ENCODE measurements at regions of chr2 and their contacts with region 1.

Region 1: DNA sequence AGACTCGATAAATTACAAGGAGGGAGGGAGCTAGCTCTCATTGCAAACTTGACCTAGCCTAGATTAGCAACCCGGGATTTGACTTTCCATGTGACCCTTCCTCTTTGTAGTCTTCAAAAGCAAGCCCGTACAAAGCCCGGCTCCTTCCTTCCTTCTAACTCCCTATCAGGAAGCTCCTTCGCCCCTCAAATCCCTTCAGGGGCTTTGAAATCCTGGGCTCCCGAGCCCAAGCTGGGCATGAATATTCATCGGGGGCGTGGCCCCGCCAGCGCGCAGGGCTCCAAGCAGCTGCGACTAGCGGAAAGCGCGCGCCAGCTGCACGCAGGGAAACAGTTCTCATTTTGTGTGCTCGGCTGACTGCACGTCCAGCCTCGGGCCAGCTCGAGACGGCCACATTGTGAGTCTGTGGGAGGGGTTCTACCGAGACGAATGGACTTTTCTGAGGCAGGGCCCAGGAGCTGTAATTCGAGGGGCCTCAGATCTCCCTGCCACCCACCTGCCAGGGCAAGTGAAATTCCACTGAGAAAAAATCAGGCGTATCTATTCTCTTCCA is 84.0 kb upstream of the PELI1 start:
- DNase-seq: peak; percentile 93
- H3K4me3 ChIP-seq: peak overlapping the region; percentile 51 to 67 (median 59)
- H3K27ac ChIP-seq: peak overlapping the region; percentile 71 to 78 (median 74)
- H3K4me1 ChIP-seq: peaks cover 12 to 39% (median 34%) of the 10 kb centered on the region in 4 donors
- H3K27me3 ChIP-seq: no peaks in the 10 kb centered on the region
- CTCF ChIP-seq: peak in 1 of 3 experiments; percentile 18
- EP300 ChIP-seq: no peak
- POLR2A ChIP-seq: no peak

Region 2: DNA sequence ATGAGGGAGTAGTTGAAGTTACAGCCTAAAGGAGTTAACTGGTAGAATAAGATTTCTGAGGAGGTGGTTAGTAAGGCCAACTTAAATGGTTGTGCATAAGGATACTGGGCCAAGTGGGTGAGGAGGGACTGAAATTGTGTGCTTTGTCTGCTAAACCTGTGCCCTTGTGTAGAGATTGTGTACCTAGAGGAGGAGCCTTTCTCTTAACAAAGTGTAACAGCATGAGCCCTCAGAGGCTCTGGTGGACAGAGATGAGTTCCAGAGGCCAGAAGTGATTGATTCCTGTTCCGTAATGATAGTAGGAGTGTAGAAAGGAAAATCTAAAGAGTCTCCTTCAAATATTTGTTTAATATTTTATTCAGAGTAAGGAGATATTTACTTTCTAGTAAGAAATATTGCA is 1134.7 kb before region 1 on chr2:
- intact Hi-C with region 1: no loop called
- DNase-seq: no peak
- H3K4me3 ChIP-seq: no peak overlapping the region
- H3K27ac ChIP-seq: no peak overlapping the region
- H3K4me1 ChIP-seq: no peaks in the 10 kb centered on the region
- H3K27me3 ChIP-seq: no peaks in the 10 kb centered on the region
- CTCF ChIP-seq: no peak
- EP300 ChIP-seq: no peak
- POLR2A ChIP-seq: no peak

Region 3: GRCh38 chr2:64052468-64053241 is 175.5 kb before region 1 on chr2:
- intact Hi-C with region 1: loop called (anchors 10 kb)
- DNase-seq: no peak
- H3K4me3 ChIP-seq: no peak overlapping the region
- H3K27ac ChIP-seq: peak overlapping the region in 3 of 4 donors; percentile 13 to 42 (median 16)
- H3K4me1 ChIP-seq: peaks cover 0 to 7% (median 5%) of the 10 kb centered on the region in 4 donors
- H3K27me3 ChIP-seq: no peaks in the 10 kb centered on the region
- CTCF ChIP-seq: no peak
- EP300 ChIP-seq: no peak
- POLR2A ChIP-seq: no peak

Region 4: GRCh38 chr2:64144057-64145013 is 83.9 kb before region 1 on chr2 and contains the start of gene PELI1:
- intact Hi-C with region 1: loop called (anchors 5 kb)
- DNase-seq: peak; percentile 99
- H3K4me3 ChIP-seq: peak within 1 kb of the TSS; percentile 68 to 100 (median 96)
- H3K27ac ChIP-seq: peak within 1 kb of the TSS; percentile 92 to 99 (median 98)
- H3K4me1 ChIP-seq: peaks cover 18 to 36% (median 34%) of the 10 kb centered on the region in 4 donors
- H3K27me3 ChIP-seq: no peaks in the 10 kb centered on the region
- CTCF ChIP-seq: peak in 2 of 3 experiments; percentile 6 to 30
- EP300 ChIP-seq: no peak
- POLR2A ChIP-seq: peak; percentile 94
- total RNA-seq, gene PELI1: 13.7 to 31.1 (median 19.7) TPM

Region 5: DNA sequence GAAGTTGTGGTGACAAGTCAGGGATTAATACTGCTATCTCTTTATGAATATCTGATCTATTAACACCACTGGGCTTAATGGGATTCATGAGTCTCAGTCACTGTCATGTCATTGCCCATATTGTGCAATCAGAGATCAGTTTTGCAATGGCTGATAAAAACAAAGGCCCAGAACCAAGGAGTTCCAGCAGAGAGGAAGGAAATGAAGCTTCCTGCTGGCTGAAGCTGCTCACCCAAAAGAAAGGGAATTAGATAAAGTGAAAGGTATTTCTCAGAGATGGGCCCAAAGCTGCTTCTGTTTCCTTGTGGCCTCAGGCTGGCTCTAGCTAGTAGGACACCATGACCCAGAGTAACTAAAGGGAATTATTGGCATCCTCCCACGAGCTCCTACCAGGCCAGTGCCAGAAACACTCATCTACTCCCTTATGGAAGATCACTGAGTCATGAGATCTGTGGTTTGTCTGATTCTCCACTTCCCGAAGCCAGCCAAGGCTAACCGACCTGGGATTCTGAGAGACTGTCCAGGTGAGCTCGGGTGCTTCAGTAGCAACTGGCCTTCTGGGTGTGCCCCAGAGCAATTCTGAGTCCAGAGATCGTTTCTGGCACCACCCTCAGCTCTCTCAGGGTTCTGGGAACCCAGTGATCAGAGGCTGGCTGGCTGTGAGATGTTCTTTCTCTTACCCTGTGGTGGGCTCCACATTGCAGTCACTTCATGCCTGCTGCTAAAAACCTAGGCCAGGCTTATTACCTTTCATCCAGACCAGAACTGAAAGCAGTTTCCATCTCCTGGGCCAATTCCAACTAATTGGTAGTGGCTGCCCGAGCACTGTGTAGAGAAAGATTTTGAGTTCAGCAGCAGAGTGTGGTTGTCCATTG is 45.6 kb after region 1 on chr2:
- intact Hi-C with region 1: loop called (anchors 5 kb)
- DNase-seq: no peak
- H3K4me3 ChIP-seq: peak overlapping the region in 1 of 4 donors; percentile 15
- H3K27ac ChIP-seq: peak overlapping the region; percentile 63 to 79 (median 74)
- H3K4me1 ChIP-seq: peaks cover 21 to 34% (median 27%) of the 10 kb centered on the region in 4 donors
- H3K27me3 ChIP-seq: no peaks in the 10 kb centered on the region
- CTCF ChIP-seq: no peak
- EP300 ChIP-seq: no peak
- POLR2A ChIP-seq: no peak

Measured in esophagus muscularis mucosa (tissue), 4 donors.